ENCODE measurements at regions of chr1 and their contacts with region 1.

Region 1: DNA sequence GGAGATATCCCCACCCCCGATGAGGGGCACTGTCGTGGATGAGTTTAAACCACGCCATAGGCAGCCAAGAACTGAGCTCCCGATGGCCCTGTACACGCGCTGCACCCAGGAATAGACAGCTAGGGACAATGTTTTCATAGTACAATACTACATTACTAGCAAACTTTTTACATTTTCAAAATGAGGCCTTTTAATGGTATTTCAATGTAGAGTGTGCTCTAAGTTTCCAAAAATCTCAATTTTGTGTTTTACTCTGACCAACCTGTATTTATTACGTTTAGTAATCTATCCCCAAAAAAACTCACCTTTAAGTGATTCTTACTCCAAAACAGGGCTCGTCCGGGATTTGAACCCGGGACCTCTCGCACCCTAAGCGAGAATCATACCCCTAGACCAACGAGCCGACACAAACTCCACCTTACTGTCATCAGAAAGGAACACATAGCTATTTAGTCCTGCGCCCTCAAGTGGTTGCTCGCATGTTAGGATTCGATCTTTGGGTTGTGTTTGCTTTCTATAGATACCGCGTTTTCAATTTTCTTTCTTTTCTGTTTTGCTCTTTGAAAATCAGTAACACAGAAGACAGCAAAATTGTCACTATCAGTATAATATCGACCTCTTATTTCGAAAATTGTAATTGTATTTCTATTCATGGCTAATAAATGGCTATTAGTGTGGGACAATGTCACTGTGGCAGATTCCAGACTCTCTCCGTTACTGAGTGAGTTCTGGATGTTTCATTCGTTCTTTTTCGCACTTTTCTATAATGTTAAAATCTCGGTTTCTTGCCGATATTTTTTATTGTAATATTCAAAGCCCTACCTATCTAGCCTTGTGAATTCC is 6.4 kb upstream of the MPZL1 start:
- DNase-seq: peak; percentile 92
- H3K4me3 ChIP-seq: peak overlapping the region; percentile 67
- H3K27ac ChIP-seq: peak overlapping the region; percentile 92
- H3K4me1 ChIP-seq: no peaks in the 10 kb centered on the region
- H3K27me3 ChIP-seq: no peaks in the 10 kb centered on the region
- CTCF ChIP-seq: peak; percentile 92

Region 2: GRCh38 chr1:165827268-165828102 is 1887.9 kb before region 1 on chr1 and contains the start of gene UCK2:
- CTCF ChIA-PET with region 1: no interaction called
- POLR2A ChIA-PET with region 1: no interaction called
- intact Hi-C with region 1: loop called (anchors 10 kb)
- DNase-seq: peak; percentile 81
- H3K4me3 ChIP-seq: peak within 1 kb of the TSS; percentile 86
- H3K27ac ChIP-seq: peak within 1 kb of the TSS; percentile 93
- H3K4me1 ChIP-seq: peaks cover 9% of the 10 kb centered on the region
- H3K27me3 ChIP-seq: no peaks in the 10 kb centered on the region
- CTCF ChIP-seq: 0 out of 2 replicates have a peak, but pooled peaks have one; percentile 9
- total RNA-seq, gene UCK2: 78.7 and 84.2 TPM in 2 replicates

Region 3: DNA sequence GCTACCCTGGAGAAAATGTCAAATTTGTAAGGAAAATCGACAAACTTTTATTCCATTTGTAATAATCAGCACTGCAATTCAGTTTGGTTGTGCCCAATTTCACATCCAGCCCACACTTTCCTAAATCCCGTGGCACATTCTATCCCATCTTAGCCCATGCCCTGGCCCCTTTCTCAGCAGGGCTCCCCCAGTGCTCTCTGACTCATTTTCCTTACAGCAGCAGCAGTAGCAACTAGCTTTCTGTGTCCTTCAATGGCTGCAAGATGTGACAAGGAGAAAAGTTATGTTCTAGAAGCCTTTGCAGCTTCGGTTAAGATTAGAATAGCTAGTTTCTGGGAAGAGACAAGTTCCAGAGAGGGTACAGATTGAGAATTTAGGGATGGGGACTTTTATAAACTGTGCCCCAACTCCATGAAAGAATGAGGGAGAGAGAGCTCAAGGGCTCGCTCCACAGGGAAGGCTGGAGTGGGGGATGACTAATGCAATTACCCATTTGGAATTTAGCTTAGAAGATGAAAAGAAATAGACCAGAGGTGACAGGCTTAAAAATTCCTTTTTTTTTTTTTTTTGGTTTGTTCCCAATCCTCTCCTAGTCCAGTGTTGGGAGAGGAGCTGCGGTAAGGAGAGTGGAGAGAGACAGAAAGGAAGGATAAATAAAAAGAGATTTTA is 541.7 kb before region 1 on chr1:
- CTCF ChIA-PET with region 1: no interaction called
- POLR2A ChIA-PET with region 1: interaction called, 12 read pairs
- intact Hi-C with region 1: no loop called
- DNase-seq: peak; percentile 87
- H3K4me3 ChIP-seq: no peak overlapping the region
- H3K27ac ChIP-seq: peak overlapping the region; percentile 22
- H3K4me1 ChIP-seq: peaks cover 44% of the 10 kb centered on the region
- H3K27me3 ChIP-seq: no peaks in the 10 kb centered on the region
- CTCF ChIP-seq: no peak

Region 4: GRCh38 chr1:167409183-167409582 is 306.2 kb before region 1 on chr1:
- CTCF ChIA-PET with region 1: no interaction called
- POLR2A ChIA-PET with region 1: no interaction called
- intact Hi-C with region 1: no loop called
- DNase-seq: no peak
- H3K4me3 ChIP-seq: no peak overlapping the region
- H3K27ac ChIP-seq: no peak overlapping the region
- H3K4me1 ChIP-seq: no peaks in the 10 kb centered on the region
- H3K27me3 ChIP-seq: no peaks in the 10 kb centered on the region
- CTCF ChIP-seq: no peak; the same call in 1 of the 2 replicates

Region 5: GRCh38 chr1:167555971-167556714 is 159.2 kb before region 1 on chr1:
- CTCF ChIA-PET with region 1: no interaction called
- POLR2A ChIA-PET with region 1: interaction called, 10 read pairs
- intact Hi-C with region 1: no loop called
- DNase-seq: peak; percentile 80
- H3K4me3 ChIP-seq: no peak overlapping the region
- H3K27ac ChIP-seq: no peak overlapping the region
- H3K4me1 ChIP-seq: peaks cover 10% of the 10 kb centered on the region
- H3K27me3 ChIP-seq: no peaks in the 10 kb centered on the region
- CTCF ChIP-seq: peak; percentile 91

Region 6: GRCh38 chr1:167612587-167613385 is 102.6 kb before region 1 on chr1:
- CTCF ChIA-PET with region 1: no interaction called
- POLR2A ChIA-PET with region 1: no interaction called
- intact Hi-C with region 1: no loop called
- DNase-seq: no peak
- H3K4me3 ChIP-seq: no peak overlapping the region
- H3K27ac ChIP-seq: no peak overlapping the region
- H3K4me1 ChIP-seq: peaks cover 7% of the 10 kb centered on the region
- H3K27me3 ChIP-seq: no peaks in the 10 kb centered on the region
- CTCF ChIP-seq: no peak

Region 7: GRCh38 chr1:167803358-167804207 is 88.2 kb after region 1 on chr1:
- CTCF ChIA-PET with region 1: interaction called, 12 read pairs
- POLR2A ChIA-PET with region 1: no interaction called
- intact Hi-C with region 1: loop called (anchors 2 kb)
- DNase-seq: peak; percentile 96
- H3K4me3 ChIP-seq: no peak overlapping the region
- H3K27ac ChIP-seq: no peak overlapping the region
- H3K4me1 ChIP-seq: no peaks in the 10 kb centered on the region
- H3K27me3 ChIP-seq: no peaks in the 10 kb centered on the region
- CTCF ChIP-seq: peak; percentile 99

Region 8: GRCh38 chr1:167849666-167850065 is 134.3 kb after region 1 on chr1:
- CTCF ChIA-PET with region 1: no interaction called
- POLR2A ChIA-PET with region 1: no interaction called
- intact Hi-C with region 1: no loop called
- DNase-seq: no peak
- H3K4me3 ChIP-seq: no peak overlapping the region
- H3K27ac ChIP-seq: no peak overlapping the region
- H3K4me1 ChIP-seq: no peaks in the 10 kb centered on the region
- H3K27me3 ChIP-seq: no peaks in the 10 kb centered on the region
- CTCF ChIP-seq: no peak

Region 9: GRCh38 chr1:167936068-167936929 is 220.9 kb after region 1 on chr1 and contains the start of gene DCAF6:
- CTCF ChIA-PET with region 1: no interaction called
- POLR2A ChIA-PET with region 1: no interaction called
- intact Hi-C with region 1: loop called (anchors 10 kb)
- DNase-seq: peak; percentile 99
- H3K4me3 ChIP-seq: peak within 1 kb of the TSS; percentile 75
- H3K27ac ChIP-seq: peak within 1 kb of the TSS; percentile 98
- H3K4me1 ChIP-seq: peaks cover 15% of the 10 kb centered on the region
- H3K27me3 ChIP-seq: no peaks in the 10 kb centered on the region
- CTCF ChIP-seq: no peak
- total RNA-seq, gene DCAF6: 31.9 and 32.0 TPM in 2 replicates

Region 10: DNA sequence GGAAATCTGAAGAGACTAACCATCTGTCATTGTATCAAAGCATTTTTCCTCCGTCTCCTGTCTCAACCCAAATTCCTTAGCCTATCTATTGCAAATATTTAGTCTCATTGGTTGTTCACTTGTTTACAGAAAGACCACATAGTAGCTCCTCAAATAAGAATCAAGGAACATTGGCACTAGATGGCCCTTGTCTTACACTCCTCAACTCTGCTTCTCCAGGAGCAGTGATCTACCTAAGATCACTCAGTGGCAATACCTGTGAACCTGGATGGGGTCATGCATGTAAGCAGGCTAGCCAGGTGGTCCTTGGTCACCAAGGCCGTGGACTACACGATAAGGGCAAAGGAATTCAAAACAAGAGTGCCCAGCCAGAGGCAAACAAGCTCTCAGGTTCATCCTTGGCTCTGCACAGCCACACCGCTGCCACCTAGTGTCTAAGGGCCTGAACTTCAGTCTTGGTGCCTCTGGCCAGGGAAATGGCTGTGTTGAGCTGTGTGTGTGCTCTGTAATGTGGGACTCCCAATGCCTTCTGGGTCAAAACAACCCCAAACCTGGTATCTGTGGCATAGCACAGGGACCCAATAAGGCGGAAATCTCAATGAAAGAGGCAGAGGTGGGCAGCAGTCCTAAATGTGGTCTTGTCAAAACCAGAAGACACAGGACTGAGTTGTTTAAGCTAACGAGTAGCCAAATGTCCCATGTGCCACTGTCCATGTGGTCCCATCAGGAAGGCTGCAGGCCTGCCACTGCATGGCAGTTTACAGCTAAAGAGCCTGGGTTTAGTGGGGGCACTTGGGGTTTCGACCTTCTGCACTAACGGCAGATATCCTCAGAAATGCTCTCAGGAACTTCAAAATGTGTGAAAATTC is 366.9 kb after region 1 on chr1:
- CTCF ChIA-PET with region 1: interaction called, 12 read pairs
- POLR2A ChIA-PET with region 1: no interaction called
- intact Hi-C with region 1: loop called (anchors 2 kb)
- DNase-seq: peak; percentile 79
- H3K4me3 ChIP-seq: no peak overlapping the region
- H3K27ac ChIP-seq: no peak overlapping the region
- H3K4me1 ChIP-seq: no peaks in the 10 kb centered on the region
- H3K27me3 ChIP-seq: no peaks in the 10 kb centered on the region
- CTCF ChIP-seq: peak; percentile 93

Measured in A673 (cell line).